CD4-positive, alpha-beta T cell (primary cell): ENCODE measurements at regions of chr1 and their contacts with region 1.

Region 1: GRCh38 chr1:205273551-205273982 is 45.8 kb downstream of the TMCC2 start:
- DNase-seq: peak; percentile 81 to 92 (median 86)
- ATAC-seq: peak; percentile 83
- H3K4me3 ChIP-seq: peak overlapping the region; percentile 7
- H3K4me3 Mint-ChIP-seq: peak overlapping the region; percentile 81
- H3K27ac ChIP-seq: no peak overlapping the region
- H3K27ac Mint-ChIP-seq: peak overlapping the region; percentile 67
- H3K4me1 ChIP-seq: peaks cover 48% of the 10 kb centered on the region
- H3K4me1 Mint-ChIP-seq: peaks cover 40% of the 10 kb centered on the region
- H3K27me3 ChIP-seq: no peaks in the 10 kb centered on the region
- H3K27me3 Mint-ChIP-seq: no peaks in the 10 kb centered on the region
- CTCF ChIP-seq: peak; percentile 97

Region 2: DNA sequence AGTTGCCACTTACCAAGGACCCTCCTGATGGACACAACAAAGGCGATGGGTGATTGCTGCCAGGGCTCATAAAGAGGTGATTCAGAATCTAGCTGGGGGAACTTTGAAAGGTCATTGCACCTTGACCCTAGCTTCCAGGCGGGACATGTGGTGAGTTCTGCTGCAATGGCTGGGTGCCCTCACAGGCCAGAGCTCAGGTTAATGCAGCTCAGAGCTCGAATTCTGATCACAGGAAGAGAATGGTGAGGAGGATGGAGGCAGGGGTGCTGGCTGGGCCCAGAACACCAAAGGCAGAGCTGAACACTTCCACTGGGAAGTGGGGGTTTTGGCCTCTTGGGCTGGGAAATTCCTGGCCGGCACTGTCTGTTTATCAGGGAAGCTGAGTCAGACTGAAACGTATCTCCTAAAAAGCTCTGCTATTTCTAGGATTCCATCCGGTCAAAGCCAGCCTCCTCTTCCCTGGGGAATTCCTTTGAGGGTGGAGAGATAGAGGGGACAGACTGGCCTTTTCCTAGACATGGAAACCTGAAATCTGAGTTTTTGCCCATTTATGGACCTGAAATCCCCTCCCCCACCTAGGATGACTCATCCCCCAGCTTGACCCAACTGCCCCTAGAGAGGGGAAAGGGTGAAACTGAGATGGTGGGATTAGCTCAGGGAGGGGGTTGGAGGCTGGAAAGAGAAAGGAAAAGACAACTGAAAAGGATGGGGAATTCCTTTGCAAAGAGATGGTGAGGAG is 20.8 kb after region 1 on chr1:
- CTCF ChIA-PET with region 1: interaction called, 139 read pairs
- POLR2A ChIA-PET with region 1: interaction called, 356 read pairs
- intact Hi-C with region 1: loop called in 1 of 2 experiments (anchors 2 kb)
- DNase-seq: no peak
- ATAC-seq: no peak
- H3K4me3 ChIP-seq: no peak overlapping the region
- H3K4me3 Mint-ChIP-seq: no peak overlapping the region
- H3K27ac ChIP-seq: no peak overlapping the region
- H3K27ac Mint-ChIP-seq: peak overlapping the region; percentile 70
- H3K4me1 ChIP-seq: peaks cover 65% of the 10 kb centered on the region
- H3K4me1 Mint-ChIP-seq: peaks cover 81% of the 10 kb centered on the region
- H3K27me3 ChIP-seq: no peaks in the 10 kb centered on the region
- H3K27me3 Mint-ChIP-seq: no peaks in the 10 kb centered on the region
- CTCF ChIP-seq: no peak

Region 3: GRCh38 chr1:205313563-205314308 is 40.2 kb after region 1 on chr1:
- CTCF ChIA-PET with region 1: interaction called, 322 read pairs
- POLR2A ChIA-PET with region 1: interaction called, 918 read pairs
- intact Hi-C with region 1: no loop called
- DNase-seq: peak in 11 of 14 experiments; percentile 5 to 73 (median 33)
- ATAC-seq: peak; percentile 81
- H3K4me3 ChIP-seq: peak overlapping the region; percentile 50
- H3K4me3 Mint-ChIP-seq: peak overlapping the region; percentile 93
- H3K27ac ChIP-seq: peak overlapping the region; percentile 30 to 85
- H3K27ac Mint-ChIP-seq: peak overlapping the region; percentile 99
- H3K4me1 ChIP-seq: peaks cover 89% of the 10 kb centered on the region
- H3K4me1 Mint-ChIP-seq: peaks cover 91% of the 10 kb centered on the region
- H3K27me3 ChIP-seq: no peaks in the 10 kb centered on the region
- H3K27me3 Mint-ChIP-seq: no peaks in the 10 kb centered on the region
- CTCF ChIP-seq: no peak

Region 4: GRCh38 chr1:205344066-205344928 is 70.7 kb after region 1 on chr1:
- CTCF ChIA-PET with region 1: interaction called, 11 read pairs
- POLR2A ChIA-PET with region 1: no interaction called
- intact Hi-C with region 1: no loop called
- DNase-seq: peak in 12 of 14 experiments; percentile 17 to 69 (median 37)
- ATAC-seq: peak; percentile 90
- H3K4me3 ChIP-seq: peak overlapping the region; percentile 36
- H3K4me3 Mint-ChIP-seq: peak overlapping the region; percentile 75
- H3K27ac ChIP-seq: no peak overlapping the region
- H3K27ac Mint-ChIP-seq: no peak overlapping the region
- H3K4me1 ChIP-seq: peaks cover 19% of the 10 kb centered on the region
- H3K4me1 Mint-ChIP-seq: peaks cover 14% of the 10 kb centered on the region
- H3K27me3 ChIP-seq: peaks cover 30 to 46% of the 10 kb centered on the region in 2 experiments
- H3K27me3 Mint-ChIP-seq: peaks cover 52% of the 10 kb centered on the region
- CTCF ChIP-seq: no peak

Region 5: DNA sequence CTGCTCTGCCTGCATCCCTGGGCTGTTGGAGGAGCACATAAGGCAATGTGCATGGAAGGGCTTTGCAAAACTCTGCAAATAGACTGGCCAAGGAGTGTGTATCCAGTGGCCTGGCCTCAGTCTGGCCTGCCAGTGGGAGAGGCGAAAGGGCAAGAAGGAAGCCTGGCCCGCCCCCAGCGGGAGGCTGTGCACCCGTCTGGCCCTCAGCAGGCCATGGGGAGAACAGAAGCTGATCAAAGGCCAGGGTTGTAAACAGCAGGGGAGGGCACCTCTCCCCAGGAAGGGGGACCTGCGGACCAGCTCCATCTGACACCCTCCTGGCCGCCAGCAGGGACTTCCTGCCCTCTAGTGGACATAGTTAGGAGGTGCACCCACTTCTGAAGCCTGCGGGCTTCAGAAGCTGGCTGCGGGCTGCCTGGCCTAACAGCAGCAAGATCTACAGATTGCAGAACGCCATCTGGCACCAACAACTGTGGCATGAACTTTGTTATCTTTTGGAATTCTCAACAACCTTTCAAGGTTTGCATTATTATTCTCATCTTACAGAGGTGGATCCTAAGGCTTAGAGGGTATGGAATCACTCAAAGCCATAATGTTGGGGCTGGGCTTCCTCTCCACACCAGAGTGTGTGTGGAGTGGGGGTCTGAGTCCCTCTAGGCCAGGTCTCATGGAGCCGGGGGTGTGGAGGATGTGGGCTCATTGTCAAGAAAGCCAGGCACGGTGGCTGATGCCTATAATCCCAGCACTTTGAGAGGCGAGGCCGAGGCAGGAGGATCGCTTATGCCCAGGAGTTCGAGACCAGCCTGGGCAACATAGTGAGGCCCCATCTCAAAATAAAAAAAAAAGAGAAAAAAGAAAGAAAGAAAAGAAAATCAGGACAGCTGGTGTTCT is 212.0 kb after region 1 on chr1:
- CTCF ChIA-PET with region 1: interaction called, 16 read pairs
- POLR2A ChIA-PET with region 1: interaction called, 5 read pairs
- intact Hi-C with region 1: loop called (anchors 1 to 2 kb)
- DNase-seq: peak; percentile 42 to 86 (median 56)
- ATAC-seq: peak; percentile 78
- H3K4me3 ChIP-seq: no peak overlapping the region
- H3K4me3 Mint-ChIP-seq: no peak overlapping the region
- H3K27ac ChIP-seq: no peak overlapping the region
- H3K27ac Mint-ChIP-seq: no peak overlapping the region
- H3K4me1 ChIP-seq: peaks cover 26% of the 10 kb centered on the region
- H3K4me1 Mint-ChIP-seq: peaks cover 10% of the 10 kb centered on the region
- H3K27me3 ChIP-seq: peaks cover 7 to 12% of the 10 kb centered on the region in 2 experiments
- H3K27me3 Mint-ChIP-seq: peaks cover 77% of the 10 kb centered on the region
- CTCF ChIP-seq: peak; percentile 90

Region 6: DNA sequence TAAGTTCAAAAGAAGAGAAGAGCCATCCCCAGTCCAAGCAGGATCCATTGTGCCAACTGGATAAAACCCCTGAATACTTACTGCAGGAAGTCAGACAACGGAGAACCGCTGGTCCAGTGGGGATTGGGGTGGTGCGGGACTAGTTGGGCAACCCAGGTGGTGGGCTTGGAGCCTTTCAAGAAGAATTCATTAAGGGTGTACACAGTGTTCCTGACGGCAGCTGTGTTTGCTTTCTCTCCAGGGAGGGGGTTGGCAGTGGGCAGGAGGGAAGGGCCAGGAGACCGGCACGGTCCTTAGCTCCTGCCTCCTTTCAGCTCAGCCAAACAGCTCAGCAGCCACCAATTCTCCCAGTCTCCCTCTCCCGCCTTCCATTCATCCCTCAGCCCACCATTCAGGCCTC is 223.8 kb after region 1 on chr1:
- CTCF ChIA-PET with region 1: no interaction called
- POLR2A ChIA-PET with region 1: no interaction called
- intact Hi-C with region 1: no loop called
- DNase-seq: no peak
- ATAC-seq: no peak
- H3K4me3 ChIP-seq: no peak overlapping the region
- H3K4me3 Mint-ChIP-seq: no peak overlapping the region
- H3K27ac ChIP-seq: no peak overlapping the region
- H3K27ac Mint-ChIP-seq: no peak overlapping the region
- H3K4me1 ChIP-seq: no peaks in the 10 kb centered on the region
- H3K4me1 Mint-ChIP-seq: no peaks in the 10 kb centered on the region
- H3K27me3 ChIP-seq: peaks cover 11 to 15% of the 10 kb centered on the region in 2 experiments
- H3K27me3 Mint-ChIP-seq: peaks cover 33% of the 10 kb centered on the region
- CTCF ChIP-seq: no peak